CD8-positive, alpha-beta T cell (primary cell): ENCODE measurements at regions of chr18 and their contacts with region 1.

Region 1: DNA sequence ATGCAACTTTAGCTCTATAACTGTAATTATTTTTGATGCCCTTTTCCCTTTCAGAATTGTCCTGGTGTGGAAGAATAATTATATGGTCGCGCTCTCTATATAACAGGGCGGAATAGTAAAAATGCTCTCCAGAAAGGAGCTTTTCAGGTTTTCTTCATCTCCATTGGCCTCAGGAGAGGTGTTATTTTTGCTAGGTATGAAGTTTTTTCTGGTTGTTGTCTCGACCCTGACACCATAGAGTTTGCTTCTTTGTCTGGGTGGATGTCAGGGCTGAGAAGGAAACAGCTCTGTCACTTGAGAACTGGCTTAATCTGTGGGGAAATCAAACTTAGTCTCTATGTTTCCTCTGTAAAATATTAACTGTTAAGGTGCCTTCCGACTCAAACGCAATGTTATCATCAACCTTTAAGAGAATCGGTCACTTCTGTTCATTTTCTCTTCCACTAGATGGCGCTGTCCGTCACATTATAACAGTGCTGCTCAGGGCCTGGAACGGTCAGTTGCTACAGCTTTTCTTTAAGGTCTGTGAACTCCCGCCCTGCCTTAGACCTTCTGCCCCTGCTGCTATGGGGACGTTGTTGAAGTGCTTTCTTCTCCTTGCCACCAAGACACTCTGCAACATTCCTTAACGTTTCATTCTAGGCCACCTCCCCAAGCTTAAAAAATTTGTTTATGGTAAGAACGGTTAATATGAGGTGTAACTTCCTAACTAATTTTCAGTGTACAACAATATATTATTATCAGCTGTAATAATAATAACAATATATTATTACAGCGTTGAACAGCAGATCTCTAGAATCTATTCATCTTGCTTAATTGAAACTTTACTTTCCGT is 23.8 kb upstream of the SERPINB12 start:
- DNase-seq: peak; percentile 2 to 76 (median 47)
- ATAC-seq: peak; percentile 51
- H3K4me3 ChIP-seq: no peak overlapping the region
- H3K4me3 Mint-ChIP-seq: no peak overlapping the region
- H3K27ac ChIP-seq: no peak overlapping the region
- H3K27ac Mint-ChIP-seq: no peak overlapping the region
- H3K4me1 ChIP-seq: no peaks in the 10 kb centered on the region
- H3K4me1 Mint-ChIP-seq: peaks cover 2% of the 10 kb centered on the region
- H3K27me3 ChIP-seq: no peaks in the 10 kb centered on the region
- H3K27me3 Mint-ChIP-seq: peaks cover 10% of the 10 kb centered on the region
- CTCF ChIP-seq: peak; percentile 68

Region 2: GRCh38 chr18:63505566-63506335 is 12.6 kb before region 1 on chr18:
- CTCF ChIA-PET with region 1: interaction called, 23 read pairs
- POLR2A ChIA-PET with region 1: interaction called, 3 read pairs
- intact Hi-C with region 1: no loop called
- DNase-seq: peak in 2 of 9 experiments; percentile 9 to 14
- ATAC-seq: no peak
- H3K4me3 ChIP-seq: no peak overlapping the region
- H3K4me3 Mint-ChIP-seq: no peak overlapping the region
- H3K27ac ChIP-seq: no peak overlapping the region
- H3K27ac Mint-ChIP-seq: no peak overlapping the region
- H3K4me1 ChIP-seq: no peaks in the 10 kb centered on the region
- H3K4me1 Mint-ChIP-seq: no peaks in the 10 kb centered on the region
- H3K27me3 ChIP-seq: peaks cover 0 to 6% of the 10 kb centered on the region in 2 experiments
- H3K27me3 Mint-ChIP-seq: peaks cover 29% of the 10 kb centered on the region
- CTCF ChIP-seq: peak; percentile 16

Region 3: GRCh38 chr18:63848159-63848558 is 329.8 kb after region 1 on chr18:
- CTCF ChIA-PET with region 1: no interaction called
- POLR2A ChIA-PET with region 1: no interaction called
- intact Hi-C with region 1: loop called (anchors 5 to 10 kb)
- DNase-seq: peak in 2 of 9 experiments; percentile 25
- ATAC-seq: no peak
- H3K4me3 ChIP-seq: no peak overlapping the region
- H3K4me3 Mint-ChIP-seq: no peak overlapping the region
- H3K27ac ChIP-seq: no peak overlapping the region
- H3K27ac Mint-ChIP-seq: no peak overlapping the region
- H3K4me1 ChIP-seq: no peaks in the 10 kb centered on the region
- H3K4me1 Mint-ChIP-seq: no peaks in the 10 kb centered on the region
- H3K27me3 ChIP-seq: peaks cover 0 to 4% of the 10 kb centered on the region in 2 experiments
- H3K27me3 Mint-ChIP-seq: peaks cover 5% of the 10 kb centered on the region
- CTCF ChIP-seq: no peak

Region 4: GRCh38 chr18:63979409-63979920 is 461.1 kb after region 1 on chr18:
- CTCF ChIA-PET with region 1: interaction called, 19 read pairs
- POLR2A ChIA-PET with region 1: no interaction called
- intact Hi-C with region 1: loop called (anchors 1 kb)
- DNase-seq: peak in 7 of 9 experiments; percentile 9 to 71 (median 43)
- ATAC-seq: peak; percentile 77
- H3K4me3 ChIP-seq: no peak overlapping the region
- H3K4me3 Mint-ChIP-seq: no peak overlapping the region
- H3K27ac ChIP-seq: no peak overlapping the region
- H3K27ac Mint-ChIP-seq: no peak overlapping the region
- H3K4me1 ChIP-seq: no peaks in the 10 kb centered on the region
- H3K4me1 Mint-ChIP-seq: peaks cover 16% of the 10 kb centered on the region
- H3K27me3 ChIP-seq: no peaks in the 10 kb centered on the region
- H3K27me3 Mint-ChIP-seq: no peaks in the 10 kb centered on the region
- CTCF ChIP-seq: peak; percentile 84